Activated CD8-positive, alpha-beta T cell treated with anti-CD3 and anti-CD28 coated beads for 36 hours (primary cell): ENCODE measurements at regions of chr1 and their contacts with region 1.

Region 1: DNA sequence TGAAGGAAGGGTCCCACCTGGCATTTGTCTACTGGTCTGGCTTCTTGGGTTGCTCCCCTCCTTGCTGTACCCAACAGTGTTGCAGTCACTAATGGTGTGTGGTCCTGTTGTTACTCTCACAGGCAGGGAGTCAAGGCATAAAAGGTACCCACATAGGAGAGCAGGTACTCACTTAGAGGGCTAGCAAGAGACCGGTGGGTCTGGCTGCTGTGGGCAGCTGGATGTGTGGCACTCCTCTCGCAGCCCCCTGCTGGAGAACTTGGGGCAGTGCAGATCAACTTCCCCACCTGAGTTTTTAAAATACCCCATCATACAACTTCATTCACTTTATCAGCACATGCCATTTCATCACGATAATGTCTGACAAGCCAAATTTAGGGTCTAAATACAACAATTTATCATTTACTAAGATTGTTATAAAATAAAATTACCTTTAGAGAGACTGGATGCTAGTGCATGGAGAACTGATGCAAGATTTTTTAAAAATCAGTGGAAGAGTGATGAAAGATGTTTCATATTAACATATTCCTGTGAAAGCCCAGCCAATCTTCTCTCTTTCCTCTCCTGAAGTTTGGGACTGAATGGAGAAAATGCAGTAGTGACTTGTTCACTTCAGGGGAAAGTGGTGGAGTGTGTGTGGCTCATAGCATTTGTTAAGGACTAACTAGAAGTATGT is 42.8 kb downstream of the ACP6 start:
- DNase-seq: peak; percentile 70
- ATAC-seq: peak; percentile 94
- H3K4me3 Mint-ChIP-seq: no peak overlapping the region
- H3K27ac Mint-ChIP-seq: no peak overlapping the region
- H3K4me1 Mint-ChIP-seq: peaks cover 31% of the 10 kb centered on the region
- H3K27me3 Mint-ChIP-seq: no peaks in the 10 kb centered on the region
- CTCF ChIP-seq: peak; percentile 92

Region 2: DNA sequence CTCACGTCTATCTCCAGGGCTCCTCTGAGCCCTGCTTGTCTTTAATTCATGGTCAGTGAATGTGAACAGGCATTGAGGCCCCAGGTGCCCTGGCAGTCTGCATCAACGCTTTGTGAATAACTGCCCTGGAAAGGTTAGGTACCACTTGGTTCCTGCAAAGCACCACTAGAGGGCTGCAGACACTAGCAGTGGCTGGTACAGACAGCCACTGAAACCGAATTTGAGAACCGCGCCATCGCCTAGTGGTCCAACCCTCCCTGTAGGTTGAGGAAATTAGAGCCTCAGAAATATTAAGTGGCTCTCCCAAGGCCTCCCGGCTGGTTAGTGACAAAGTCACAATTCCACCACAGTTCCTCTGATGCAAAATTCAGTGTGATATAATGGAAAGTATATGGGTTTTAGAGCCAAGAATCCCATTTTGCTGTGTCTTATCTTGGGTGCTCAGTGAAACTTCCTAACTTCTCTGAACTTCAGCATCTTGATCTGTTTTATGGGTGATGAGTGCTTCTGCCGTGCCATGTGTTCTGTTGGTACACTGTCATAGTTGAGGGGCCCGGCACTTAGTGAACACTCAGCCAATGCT is 132.5 kb before region 1 on chr1:
- CTCF ChIA-PET with region 1: interaction called, 29 read pairs
- POLR2A ChIA-PET with region 1: no interaction called
- intact Hi-C with region 1: loop called (anchors 5 kb)
- DNase-seq: peak; percentile 83
- ATAC-seq: peak; percentile 99
- H3K4me3 Mint-ChIP-seq: no peak overlapping the region
- H3K27ac Mint-ChIP-seq: no peak overlapping the region
- H3K4me1 Mint-ChIP-seq: peaks cover 3% of the 10 kb centered on the region
- H3K27me3 Mint-ChIP-seq: peaks cover 4% of the 10 kb centered on the region
- CTCF ChIP-seq: peak; percentile 96

Region 3: GRCh38 chr1:147515046-147515869 is 112.3 kb before region 1 on chr1:
- CTCF ChIA-PET with region 1: interaction called, 20 read pairs
- POLR2A ChIA-PET with region 1: interaction called, 3 read pairs
- intact Hi-C with region 1: loop called (anchors 5 kb)
- DNase-seq: peak; percentile 17
- ATAC-seq: peak; percentile 77
- H3K4me3 Mint-ChIP-seq: no peak overlapping the region
- H3K27ac Mint-ChIP-seq: peak overlapping the region; percentile 56
- H3K4me1 Mint-ChIP-seq: peaks cover 15% of the 10 kb centered on the region
- H3K27me3 Mint-ChIP-seq: peaks cover 4% of the 10 kb centered on the region
- CTCF ChIP-seq: no peak

Region 4: DNA sequence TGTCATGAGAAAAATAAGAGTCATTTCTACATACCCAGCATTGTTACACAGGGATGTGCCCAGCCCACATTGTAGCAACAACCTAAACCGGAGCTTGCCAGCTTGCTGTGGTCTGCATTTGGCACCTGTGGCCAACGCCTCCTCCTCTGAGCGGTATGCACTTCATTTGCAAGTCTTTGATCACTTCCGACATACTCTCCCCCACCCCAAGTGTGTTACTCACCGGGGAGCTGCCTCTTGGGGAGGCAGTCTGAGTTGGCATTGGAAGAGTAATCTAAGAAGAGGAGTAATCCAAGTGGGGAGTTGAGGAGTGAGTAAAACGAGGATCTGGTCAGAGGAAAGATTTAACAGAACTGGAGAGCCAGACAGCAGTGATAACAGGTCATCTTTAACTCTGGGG is 82.4 kb before region 1 on chr1:
- CTCF ChIA-PET with region 1: interaction called, 4 read pairs
- POLR2A ChIA-PET with region 1: no interaction called
- intact Hi-C with region 1: loop called (anchors 5 kb)
- DNase-seq: peak; percentile 96
- ATAC-seq: peak; percentile 73
- H3K4me3 Mint-ChIP-seq: peak overlapping the region; percentile 40
- H3K27ac Mint-ChIP-seq: peak overlapping the region; percentile 77
- H3K4me1 Mint-ChIP-seq: peaks cover 65% of the 10 kb centered on the region
- H3K27me3 Mint-ChIP-seq: no peaks in the 10 kb centered on the region
- CTCF ChIP-seq: no peak

Region 5: DNA sequence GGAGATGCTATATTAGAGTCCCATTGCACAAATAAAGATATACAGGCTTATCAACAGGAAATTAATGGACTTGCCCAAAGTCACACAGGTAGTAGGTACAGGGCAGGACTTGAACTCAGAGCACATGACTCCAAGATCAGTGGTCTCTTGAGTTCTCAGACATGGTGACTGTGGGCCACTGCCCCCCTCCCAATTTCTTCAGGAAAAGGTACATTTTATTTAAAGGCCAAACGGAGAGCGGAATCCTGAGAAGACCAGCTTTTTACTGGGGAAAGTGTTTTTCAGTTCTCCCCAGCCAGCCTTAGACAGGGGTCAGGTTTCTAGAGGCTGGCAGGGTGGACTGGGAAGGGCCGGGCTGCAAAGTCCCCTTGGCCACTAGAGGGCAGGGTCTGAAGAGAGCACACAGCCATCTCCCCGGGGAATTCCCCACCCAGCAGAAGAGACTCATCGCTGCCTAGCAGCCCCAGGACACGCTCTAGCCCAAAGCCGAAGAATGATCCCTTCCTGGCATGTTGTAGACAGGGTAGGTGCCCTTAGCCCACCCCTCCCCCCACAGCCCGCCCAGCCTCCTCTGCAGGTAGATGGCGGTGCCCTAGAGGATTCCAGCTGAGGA is 13.1 kb after region 1 on chr1:
- CTCF ChIA-PET with region 1: interaction called, 14 read pairs
- POLR2A ChIA-PET with region 1: interaction called, 6 read pairs
- intact Hi-C with region 1: no loop called
- DNase-seq: peak; percentile 90
- ATAC-seq: peak; percentile 100
- H3K4me3 Mint-ChIP-seq: no peak overlapping the region
- H3K27ac Mint-ChIP-seq: no peak overlapping the region
- H3K4me1 Mint-ChIP-seq: peaks cover 21% of the 10 kb centered on the region
- H3K27me3 Mint-ChIP-seq: no peaks in the 10 kb centered on the region
- CTCF ChIP-seq: peak; percentile 89

Region 6: GRCh38 chr1:147654549-147654948 is 27.0 kb after region 1 on chr1:
- CTCF ChIA-PET with region 1: no interaction called
- POLR2A ChIA-PET with region 1: no interaction called
- intact Hi-C with region 1: no loop called
- DNase-seq: no peak
- ATAC-seq: no peak
- H3K4me3 Mint-ChIP-seq: no peak overlapping the region
- H3K27ac Mint-ChIP-seq: no peak overlapping the region
- H3K4me1 Mint-ChIP-seq: no peaks in the 10 kb centered on the region
- H3K27me3 Mint-ChIP-seq: no peaks in the 10 kb centered on the region
- CTCF ChIP-seq: no peak

Region 7: GRCh38 chr1:147670317-147671041 is 42.9 kb after region 1 on chr1 and contains the start of gene ACP6:
- CTCF ChIA-PET with region 1: interaction called, 10 read pairs
- POLR2A ChIA-PET with region 1: no interaction called
- intact Hi-C with region 1: no loop called
- DNase-seq: peak; percentile 95
- ATAC-seq: peak; percentile 96
- H3K4me3 Mint-ChIP-seq: peak within 1 kb of the TSS; percentile 90
- H3K27ac Mint-ChIP-seq: peak within 1 kb of the TSS; percentile 85
- H3K4me1 Mint-ChIP-seq: peaks cover 20% of the 10 kb centered on the region
- H3K27me3 Mint-ChIP-seq: peaks cover 4% of the 10 kb centered on the region
- CTCF ChIP-seq: no peak
- total RNA-seq, gene ACP6: 16.9 to 20.9 TPM